ENCODE measurements at regions of chr7 and their contacts with region 1.

Region 1: DNA sequence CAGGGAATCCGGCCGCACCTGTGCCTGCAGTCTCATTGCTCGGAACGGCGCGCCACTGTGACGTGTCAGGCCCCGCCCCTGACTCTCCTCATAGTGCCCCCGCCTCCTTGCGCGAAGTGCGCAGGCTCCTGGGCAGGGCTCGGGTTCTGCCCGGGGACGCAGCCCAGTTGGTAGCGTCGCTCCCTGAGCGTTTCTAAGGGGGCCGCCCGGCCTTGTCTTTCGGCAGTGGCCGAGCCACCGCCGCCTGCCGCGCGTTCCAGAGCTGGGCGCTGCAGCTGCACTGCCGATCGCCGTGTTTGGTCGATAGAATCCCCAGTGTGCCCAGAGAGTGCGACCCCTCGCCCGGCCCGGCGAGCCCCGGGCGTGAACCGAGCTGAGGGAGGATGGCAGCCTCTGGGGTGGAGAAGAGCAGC is at the start of gene KLHL7:
- DNase-seq: peak; percentile 92 to 96 (median 94)
- H3K4me3 ChIP-seq: peak within 1 kb of the TSS; percentile 86
- H3K4me3 Mint-ChIP-seq: peak within 1 kb of the TSS; percentile 90 to 99 (median 98)
- H3K27ac ChIP-seq: peak within 1 kb of the TSS; percentile 97
- H3K27ac Mint-ChIP-seq: peak within 1 kb of the TSS; percentile 93 to 99 (median 97)
- H3K4me1 ChIP-seq: peaks cover 30% of the 10 kb centered on the region
- H3K4me1 Mint-ChIP-seq: peaks cover 40 to 55% (median 49%) of the 10 kb centered on the region in 3 donors
- H3K27me3 ChIP-seq: no peaks in the 10 kb centered on the region
- H3K27me3 Mint-ChIP-seq: no peaks in the 10 kb centered on the region
- total RNA-seq, gene KLHL7: 20.4 to 20.9 TPM

Region 2: DNA sequence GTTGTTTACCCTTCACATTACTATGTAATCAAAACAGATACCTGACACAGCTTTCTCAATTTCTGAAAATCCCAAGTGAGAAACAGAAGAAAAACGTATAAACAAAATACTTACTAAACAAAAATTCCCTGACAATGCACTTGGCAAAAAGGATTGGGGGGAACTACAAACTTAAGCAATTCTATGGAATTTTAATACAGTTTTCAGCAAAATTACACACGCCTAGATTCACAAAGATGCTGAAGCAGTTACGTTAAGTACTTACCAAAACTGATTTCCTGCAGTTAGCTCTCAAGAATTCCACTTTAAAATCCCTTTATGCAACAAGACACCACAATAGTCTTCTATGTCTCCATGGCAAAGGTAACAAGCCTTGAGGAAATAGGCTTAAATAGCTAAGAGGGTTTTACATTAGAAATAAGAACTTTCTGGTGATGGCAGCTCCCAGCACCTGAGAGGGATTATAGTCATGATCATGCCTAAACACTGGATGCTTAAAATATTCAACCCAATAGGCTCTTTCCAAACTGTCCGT is 293.8 kb before region 1 on chr7:
- CTCF ChIA-PET with region 1: no interaction called
- POLR2A ChIA-PET with region 1: interaction called, 10 read pairs
- DNase-seq: no peak
- H3K4me3 ChIP-seq: no peak overlapping the region
- H3K4me3 Mint-ChIP-seq: no peak overlapping the region
- H3K27ac ChIP-seq: no peak overlapping the region
- H3K27ac Mint-ChIP-seq: peak overlapping the region in 1 of 8 donors; percentile 7
- H3K4me1 ChIP-seq: peaks cover 3% of the 10 kb centered on the region
- H3K4me1 Mint-ChIP-seq: peaks cover 18 to 32% (median 22%) of the 10 kb centered on the region in 3 donors
- H3K27me3 ChIP-seq: no peaks in the 10 kb centered on the region
- H3K27me3 Mint-ChIP-seq: no peaks in the 10 kb centered on the region

Region 3: GRCh38 chr7:22860784-22861482 is 244.7 kb before region 1 on chr7:
- CTCF ChIA-PET with region 1: no interaction called
- POLR2A ChIA-PET with region 1: no interaction called
- DNase-seq: peak in 3 of 5 donors; percentile 6 to 15 (median 6)
- H3K4me3 ChIP-seq: no peak overlapping the region
- H3K4me3 Mint-ChIP-seq: no peak overlapping the region
- H3K27ac ChIP-seq: no peak overlapping the region
- H3K27ac Mint-ChIP-seq: no peak overlapping the region
- H3K4me1 ChIP-seq: no peaks in the 10 kb centered on the region
- H3K4me1 Mint-ChIP-seq: peaks cover 11 to 29% (median 19%) of the 10 kb centered on the region in 3 donors
- H3K27me3 ChIP-seq: no peaks in the 10 kb centered on the region
- H3K27me3 Mint-ChIP-seq: no peaks in the 10 kb centered on the region

Region 4: DNA sequence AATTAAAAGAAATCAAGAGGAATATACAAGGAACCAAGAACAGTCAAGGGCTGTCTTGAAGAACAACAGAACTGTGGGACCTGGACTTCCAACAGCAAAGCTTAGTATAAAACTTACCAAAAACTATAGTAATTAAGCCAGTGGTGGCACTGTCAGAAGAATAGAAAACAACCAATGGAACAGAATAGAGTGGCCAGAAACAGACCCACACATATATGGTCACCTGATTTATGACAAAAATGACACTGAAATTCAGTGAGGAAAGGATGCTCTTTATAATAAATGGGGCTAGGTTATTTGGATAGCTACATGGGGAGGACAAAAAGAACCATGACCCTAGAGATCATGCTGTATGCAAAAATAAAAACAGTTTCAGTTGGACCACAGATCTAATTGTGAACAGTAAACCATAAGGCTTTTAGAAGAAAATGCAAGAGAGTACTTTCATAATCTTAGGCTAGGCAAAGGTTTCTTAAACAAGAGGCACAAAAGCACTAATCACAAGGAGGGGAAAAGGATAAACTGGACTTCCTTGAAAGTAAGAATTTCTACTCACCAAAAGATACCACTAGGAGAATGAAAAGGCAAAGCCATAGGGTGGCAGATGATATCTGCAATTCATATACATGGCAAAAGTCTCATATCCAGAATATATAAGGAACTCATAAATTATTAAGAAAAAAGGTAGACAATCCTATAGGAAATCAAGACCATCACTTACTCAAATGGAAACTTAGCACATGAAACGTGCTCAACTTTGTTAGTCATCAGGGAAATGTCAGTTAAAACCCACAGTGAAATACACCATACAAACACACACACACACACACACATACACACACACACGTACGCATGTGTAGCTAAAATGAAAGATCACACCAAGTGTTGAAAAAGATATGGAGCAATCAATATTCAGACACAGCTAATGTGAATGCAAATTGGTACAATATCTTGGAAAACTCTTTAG is 112.5 kb before region 1 on chr7:
- CTCF ChIA-PET with region 1: no interaction called
- POLR2A ChIA-PET with region 1: no interaction called
- DNase-seq: no peak
- H3K4me3 ChIP-seq: no peak overlapping the region
- H3K4me3 Mint-ChIP-seq: no peak overlapping the region
- H3K27ac ChIP-seq: no peak overlapping the region
- H3K27ac Mint-ChIP-seq: peak overlapping the region in 1 of 8 donors; percentile 42
- H3K4me1 ChIP-seq: no peaks in the 10 kb centered on the region
- H3K4me1 Mint-ChIP-seq: peaks cover 22 to 36% (median 23%) of the 10 kb centered on the region in 3 donors
- H3K27me3 ChIP-seq: no peaks in the 10 kb centered on the region
- H3K27me3 Mint-ChIP-seq: no peaks in the 10 kb centered on the region

Region 5: GRCh38 chr7:23121165-23121564 is 15.5 kb after region 1 on chr7:
- CTCF ChIA-PET with region 1: no interaction called
- POLR2A ChIA-PET with region 1: no interaction called
- DNase-seq: no peak
- H3K4me3 ChIP-seq: no peak overlapping the region
- H3K4me3 Mint-ChIP-seq: no peak overlapping the region
- H3K27ac ChIP-seq: no peak overlapping the region
- H3K27ac Mint-ChIP-seq: peak overlapping the region in 1 of 8 donors; percentile 26
- H3K4me1 ChIP-seq: no peaks in the 10 kb centered on the region
- H3K4me1 Mint-ChIP-seq: peaks cover 11 to 31% (median 15%) of the 10 kb centered on the region in 3 donors
- H3K27me3 ChIP-seq: no peaks in the 10 kb centered on the region
- H3K27me3 Mint-ChIP-seq: no peaks in the 10 kb centered on the region

Region 6: DNA sequence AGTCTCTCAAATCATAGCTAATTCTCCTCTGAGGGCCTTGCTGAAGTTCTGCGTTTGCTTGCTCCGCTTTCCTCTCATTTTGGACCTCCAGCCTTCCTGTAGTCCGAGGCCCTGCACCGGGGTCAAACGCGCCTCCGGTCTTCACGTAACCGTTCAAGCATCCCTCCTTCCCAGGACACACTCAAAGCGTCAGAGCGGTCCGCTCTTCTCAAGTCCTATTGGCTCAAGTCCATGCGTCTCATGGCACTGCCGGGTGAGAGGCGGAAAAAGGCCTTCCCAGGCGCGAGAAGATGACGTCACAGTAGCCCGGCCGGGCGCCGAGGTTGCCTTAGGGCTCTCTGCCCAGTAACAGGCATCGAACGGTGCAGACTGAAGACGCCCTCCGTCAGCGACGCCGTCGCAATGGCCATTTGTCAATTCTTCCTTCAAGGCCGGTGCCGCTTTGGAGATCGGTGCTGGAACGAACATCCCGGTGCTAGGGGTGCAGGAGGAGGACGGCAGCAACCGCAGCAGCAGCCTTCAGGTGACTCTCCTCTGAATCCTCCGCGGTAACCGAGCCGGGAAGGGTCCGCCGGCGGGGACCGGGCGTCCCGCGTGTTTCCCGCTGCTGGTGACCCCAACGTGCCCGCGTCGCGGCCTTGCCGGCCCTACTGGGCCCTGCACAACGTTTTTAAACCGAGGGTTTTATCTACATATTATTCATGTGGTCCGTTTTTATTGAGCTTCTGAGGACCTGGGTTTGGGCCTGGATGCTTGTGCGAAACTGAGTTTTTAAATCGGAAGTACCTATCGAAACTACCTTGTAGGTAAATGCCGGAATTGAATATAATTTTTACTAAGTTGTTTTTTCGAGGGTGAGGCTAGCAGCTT is 76.3 kb after region 1 on chr7 and contains the start of gene NUP42:
- CTCF ChIA-PET with region 1: interaction called, 6 read pairs
- POLR2A ChIA-PET with region 1: interaction called, 26 read pairs
- DNase-seq: peak; percentile 91 to 97 (median 94)
- H3K4me3 ChIP-seq: peak within 1 kb of the TSS; percentile 68
- H3K4me3 Mint-ChIP-seq: peak within 1 kb of the TSS; percentile 92 to 98 (median 94)
- H3K27ac ChIP-seq: peak within 1 kb of the TSS; percentile 94
- H3K27ac Mint-ChIP-seq: peak within 1 kb of the TSS; percentile 94 to 100 (median 98)
- H3K4me1 ChIP-seq: peaks cover 28% of the 10 kb centered on the region
- H3K4me1 Mint-ChIP-seq: peaks cover 37 to 53% (median 48%) of the 10 kb centered on the region in 3 donors
- H3K27me3 ChIP-seq: no peaks in the 10 kb centered on the region
- H3K27me3 Mint-ChIP-seq: peaks cover 0 to 5% of the 10 kb centered on the region in 2 donors
- total RNA-seq, gene NUP42: 39.5 to 40.1 TPM

Region 7: DNA sequence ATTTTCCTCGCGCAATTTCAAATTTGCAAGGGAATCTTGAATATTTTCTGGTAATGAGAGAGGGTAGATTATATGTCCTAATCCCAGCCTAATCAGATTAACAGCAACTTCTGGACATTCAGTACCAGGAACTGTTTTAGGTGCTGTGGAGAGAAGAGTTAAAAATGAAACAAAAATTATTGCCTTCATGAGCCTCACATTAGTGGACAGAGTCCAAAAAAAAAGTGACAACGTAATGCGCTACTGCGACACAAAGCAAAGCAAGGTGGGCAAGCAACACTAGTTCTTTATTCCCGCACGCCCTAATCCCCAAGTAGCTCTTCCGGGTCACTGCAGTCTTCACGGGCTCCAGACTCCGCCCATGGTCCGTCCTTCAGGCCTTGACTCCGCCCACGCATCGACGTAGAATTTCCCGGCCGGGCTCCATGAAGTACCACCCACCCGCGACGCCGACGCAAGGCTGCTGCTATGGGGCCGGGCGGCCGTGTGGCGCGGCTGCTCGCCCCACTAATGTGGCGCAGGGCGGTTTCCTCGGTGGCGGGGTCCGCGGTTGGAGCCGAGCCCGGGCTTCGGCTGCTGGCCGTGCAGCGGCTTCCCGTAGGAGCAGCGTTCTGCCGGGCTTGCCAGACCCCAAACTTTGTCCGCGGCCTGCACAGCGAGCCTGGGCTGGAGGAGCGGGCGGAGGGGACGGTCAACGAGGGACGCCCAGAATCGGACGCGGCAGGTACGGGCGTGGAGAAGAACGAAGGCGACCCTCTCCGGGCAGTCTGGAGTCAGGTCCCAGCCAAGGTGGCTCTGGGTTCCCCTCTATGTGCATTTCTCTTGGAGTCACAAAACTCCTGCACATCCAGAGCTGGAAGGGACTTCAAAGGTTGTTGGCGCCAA is 193.5 kb after region 1 on chr7 and contains the start of gene MALSU1:
- CTCF ChIA-PET with region 1: no interaction called
- POLR2A ChIA-PET with region 1: interaction called, 11 read pairs
- DNase-seq: peak; percentile 93 to 97 (median 94)
- H3K4me3 ChIP-seq: peak within 1 kb of the TSS; percentile 90
- H3K4me3 Mint-ChIP-seq: peak within 1 kb of the TSS; percentile 85 to 96 (median 94)
- H3K27ac ChIP-seq: peak within 1 kb of the TSS; percentile 88
- H3K27ac Mint-ChIP-seq: peak within 1 kb of the TSS; percentile 87 to 99 (median 98)
- H3K4me1 ChIP-seq: peaks cover 24% of the 10 kb centered on the region
- H3K4me1 Mint-ChIP-seq: peaks cover 39 to 57% (median 42%) of the 10 kb centered on the region in 3 donors
- H3K27me3 ChIP-seq: no peaks in the 10 kb centered on the region
- H3K27me3 Mint-ChIP-seq: peaks cover 1 to 3% of the 10 kb centered on the region in 2 donors
- total RNA-seq, gene MALSU1: 86.3 to 87.8 TPM

Measured in CD8-positive, alpha-beta memory T cell (primary cell).